ENCODE measurements at regions of chr4 and their contacts with region 1.

Region 1: DNA sequence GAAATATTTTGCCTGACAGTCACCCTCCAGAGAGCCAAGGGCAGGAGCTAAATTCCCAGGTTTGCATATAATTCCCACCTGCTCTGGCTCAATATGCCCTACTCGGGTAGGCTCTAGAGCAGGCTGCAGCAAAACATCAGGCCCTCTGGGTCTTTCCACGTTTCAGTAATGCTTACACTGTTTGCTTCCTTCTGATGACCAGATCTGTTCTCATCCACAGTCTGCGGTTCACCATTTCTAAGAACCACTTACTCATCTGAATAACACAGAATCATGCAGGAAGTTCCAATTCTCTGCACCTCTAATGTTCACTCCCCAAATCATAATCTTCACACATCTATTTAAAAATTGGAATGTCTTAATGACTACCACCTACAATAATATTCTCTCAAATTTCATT is 141.4 kb downstream of the PPP3CA start:
- DNase-seq: peak; percentile 14
- ATAC-seq: peak; percentile 43
- H3K4me3 ChIP-seq: no peak overlapping the region
- H3K4me3 Mint-ChIP-seq: peak overlapping the region; percentile 4
- H3K27ac ChIP-seq: no peak overlapping the region
- H3K27ac Mint-ChIP-seq: no peak overlapping the region
- H3K4me1 ChIP-seq: peaks cover 4 to 17% of the 10 kb centered on the region in 2 donors
- H3K4me1 Mint-ChIP-seq: peaks cover 56% of the 10 kb centered on the region
- H3K27me3 ChIP-seq: no peaks in the 10 kb centered on the region
- H3K27me3 Mint-ChIP-seq: no peaks in the 10 kb centered on the region
- CTCF ChIP-seq: no peak

Region 2: DNA sequence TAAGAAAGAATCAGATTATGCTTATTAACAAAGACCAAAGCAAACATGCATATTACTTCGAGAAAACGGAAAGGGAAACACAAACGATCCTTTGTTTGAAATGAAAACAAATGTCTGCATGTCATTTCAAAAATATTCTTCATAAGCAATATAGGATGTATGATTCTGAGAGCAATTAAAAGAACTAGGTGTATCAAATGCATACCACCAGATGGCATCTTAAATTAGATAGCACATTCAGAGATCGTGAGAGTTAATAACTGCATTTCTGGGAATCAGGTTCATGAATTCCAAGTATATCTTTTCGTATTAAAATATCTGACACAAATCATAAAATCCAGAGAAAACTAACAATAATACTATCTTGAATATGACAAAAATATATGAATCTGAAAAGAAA is 18.1 kb before region 1 on chr4:
- CTCF ChIA-PET with region 1: interaction called, 3 read pairs
- POLR2A ChIA-PET with region 1: interaction called, 3 read pairs
- intact Hi-C with region 1: loop called (anchors 2 kb)
- DNase-seq: peak; percentile 23
- ATAC-seq: no peak
- H3K4me3 ChIP-seq: no peak overlapping the region
- H3K4me3 Mint-ChIP-seq: no peak overlapping the region
- H3K27ac ChIP-seq: no peak overlapping the region
- H3K27ac Mint-ChIP-seq: no peak overlapping the region
- H3K4me1 ChIP-seq: peaks cover 20 to 33% of the 10 kb centered on the region in 2 donors
- H3K4me1 Mint-ChIP-seq: peaks cover 56% of the 10 kb centered on the region
- H3K27me3 ChIP-seq: no peaks in the 10 kb centered on the region
- H3K27me3 Mint-ChIP-seq: no peaks in the 10 kb centered on the region
- CTCF ChIP-seq: peak; percentile 43

Region 3: DNA sequence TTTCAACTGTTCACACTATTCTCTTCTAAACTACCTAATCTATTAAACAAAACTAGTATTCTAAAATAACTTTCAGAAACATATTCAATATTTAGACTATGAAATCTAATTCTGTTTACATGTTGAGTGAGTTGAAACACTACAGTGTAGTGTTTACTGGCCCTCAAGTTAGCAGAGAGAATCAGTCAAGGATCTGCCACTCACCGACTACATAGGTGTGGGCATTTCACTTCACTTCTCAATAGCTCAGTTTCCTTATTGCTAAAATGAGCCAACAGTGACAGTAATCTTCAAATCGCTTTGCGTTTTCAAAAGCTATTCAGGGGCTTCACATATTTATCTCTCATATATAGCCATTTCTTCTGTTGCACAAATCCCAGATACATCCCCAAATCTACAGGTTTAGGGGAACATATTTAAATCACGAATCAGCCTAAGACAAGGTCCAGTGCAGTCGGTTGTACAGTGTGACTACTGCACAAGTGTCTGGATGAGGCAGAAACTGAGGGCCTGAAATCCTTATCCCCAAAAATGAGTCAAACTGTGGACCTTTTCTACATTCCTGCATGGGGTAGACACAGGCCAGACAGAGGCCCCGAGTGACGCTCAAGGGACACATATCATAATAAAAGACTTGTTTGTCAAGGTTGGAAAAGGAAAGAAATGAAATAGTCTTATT is 11.6 kb after region 1 on chr4:
- CTCF ChIA-PET with region 1: no interaction called
- POLR2A ChIA-PET with region 1: no interaction called
- intact Hi-C with region 1: loop called (anchors 2 kb)
- DNase-seq: no peak
- ATAC-seq: no peak
- H3K4me3 ChIP-seq: no peak overlapping the region
- H3K4me3 Mint-ChIP-seq: no peak overlapping the region
- H3K27ac ChIP-seq: no peak overlapping the region
- H3K27ac Mint-ChIP-seq: no peak overlapping the region
- H3K4me1 ChIP-seq: peaks cover 0 to 8% of the 10 kb centered on the region in 2 donors
- H3K4me1 Mint-ChIP-seq: peaks cover 52% of the 10 kb centered on the region
- H3K27me3 ChIP-seq: no peaks in the 10 kb centered on the region
- H3K27me3 Mint-ChIP-seq: no peaks in the 10 kb centered on the region
- CTCF ChIP-seq: no peak

Region 4: GRCh38 chr4:101306225-101306624 is 100.3 kb after region 1 on chr4:
- CTCF ChIA-PET with region 1: no interaction called
- POLR2A ChIA-PET with region 1: no interaction called
- intact Hi-C with region 1: no loop called
- DNase-seq: no peak
- ATAC-seq: no peak
- H3K4me3 ChIP-seq: no peak overlapping the region
- H3K4me3 Mint-ChIP-seq: peak overlapping the region; percentile 60
- H3K27ac ChIP-seq: no peak overlapping the region
- H3K27ac Mint-ChIP-seq: peak overlapping the region; percentile 39
- H3K4me1 ChIP-seq: peaks cover 17 to 26% of the 10 kb centered on the region in 2 donors
- H3K4me1 Mint-ChIP-seq: peaks cover 61% of the 10 kb centered on the region
- H3K27me3 ChIP-seq: no peaks in the 10 kb centered on the region
- H3K27me3 Mint-ChIP-seq: no peaks in the 10 kb centered on the region
- CTCF ChIP-seq: no peak